HepG2 (cell line): ENCODE measurements at regions of chr17 and their contacts with region 1.

Region 1: DNA sequence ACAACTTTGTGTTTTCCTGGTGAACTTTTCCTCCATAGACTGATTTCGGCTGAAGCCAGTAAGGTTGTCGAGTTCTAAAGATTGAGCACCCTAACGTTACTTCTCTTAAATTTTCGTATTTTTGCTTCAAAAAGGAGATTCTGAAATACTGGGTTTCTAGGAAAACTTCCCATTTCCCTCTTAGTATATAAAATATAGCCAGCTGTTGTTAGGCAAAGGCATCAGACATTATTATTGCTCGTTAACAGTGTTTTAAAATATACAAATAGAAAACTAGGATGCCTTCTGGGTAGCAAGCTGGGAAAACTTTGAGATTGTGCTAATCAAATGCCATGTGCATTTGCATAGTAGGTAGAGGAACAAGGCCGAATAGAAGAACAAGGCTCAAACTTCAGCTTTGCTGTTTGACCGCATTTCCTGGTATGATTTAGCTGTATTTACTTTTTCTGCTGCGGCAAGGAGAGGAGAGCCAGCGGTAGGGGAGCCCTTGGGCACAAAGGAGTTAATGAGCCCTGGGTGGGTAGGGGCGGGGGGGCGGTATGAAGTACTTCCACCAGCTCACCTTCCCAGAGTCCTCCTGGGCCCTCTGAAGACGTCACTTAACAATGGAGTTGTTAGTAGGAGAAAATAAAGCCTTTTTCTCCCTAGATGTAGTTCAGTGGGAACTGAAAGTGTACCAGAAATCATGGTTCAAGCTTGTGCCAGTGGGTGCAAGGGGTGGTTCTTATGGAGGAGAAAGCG is 151.9 kb downstream of the MSI2 start:
- DNase-seq: peak; percentile 86
- ATAC-seq: peak; percentile 27
- H3K4me3 ChIP-seq: peak overlapping the region; percentile 26 to 57 (median 51)
- H3K27ac ChIP-seq: peak overlapping the region; percentile 96
- H3K4me1 ChIP-seq: peaks cover 100% of the 10 kb centered on the region
- H3K27me3 ChIP-seq: no peaks in the 10 kb centered on the region
- CTCF ChIP-seq: no peak
- EP300 ChIP-seq: peak in 1 of 2 experiments; percentile 41; a peak in 1 of 4 replicates
- POLR2A ChIP-seq: peak in 1 of 2 experiments; percentile 39; a peak in 1 of 4 replicates
- RAD21 ChIP-seq: no peak

Region 2: GRCh38 chr17:57255776-57256681 is 152.2 kb before region 1 on chr17 and contains the start of gene MSI2:
- CTCF ChIA-PET with region 1: no interaction called
- POLR2A ChIA-PET with region 1: interaction called, 20 read pairs
- in situ Hi-C with region 1: no loop called
- intact Hi-C with region 1: no loop called
- DNase-seq: peak; percentile 76
- ATAC-seq: peak; percentile 83
- H3K4me3 ChIP-seq: peak within 1 kb of the TSS; percentile 75 to 95 (median 79)
- H3K27ac ChIP-seq: peak within 1 kb of the TSS; percentile 63
- H3K4me1 ChIP-seq: peaks cover 54% of the 10 kb centered on the region
- H3K27me3 ChIP-seq: no peaks in the 10 kb centered on the region
- CTCF ChIP-seq: no peak
- EP300 ChIP-seq: no peak
- POLR2A ChIP-seq: peak in 1 of 2 experiments; percentile 51; a peak in 2 of 4 replicates
- RAD21 ChIP-seq: no peak
- total RNA-seq, gene MSI2: 68.1 and 78.4 TPM in 2 replicates

Region 3: DNA sequence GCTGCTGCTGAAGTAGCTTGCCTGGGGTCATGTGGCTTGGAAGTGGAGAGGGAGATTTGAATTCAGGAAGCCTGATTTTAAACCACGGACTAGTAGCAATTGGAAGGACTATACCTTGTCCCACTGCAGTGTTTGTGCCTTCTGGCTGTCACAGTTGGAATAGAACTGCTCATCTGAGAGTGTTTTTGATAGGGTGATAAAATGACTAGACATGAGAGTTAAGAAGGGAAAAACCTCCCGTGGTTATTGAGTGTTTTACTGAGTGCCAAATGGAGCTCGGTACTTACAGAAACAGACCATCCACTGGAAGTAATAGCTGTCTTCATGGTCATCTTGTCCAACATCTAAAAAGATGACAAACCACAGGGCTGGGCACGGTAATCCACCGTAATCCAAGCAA is 81.5 kb before region 1 on chr17:
- CTCF ChIA-PET with region 1: no interaction called
- POLR2A ChIA-PET with region 1: interaction called, 10 read pairs
- in situ Hi-C with region 1: no loop called
- intact Hi-C with region 1: no loop called
- DNase-seq: no peak
- ATAC-seq: no peak
- H3K4me3 ChIP-seq: no peak overlapping the region
- H3K27ac ChIP-seq: peak overlapping the region; percentile 20
- H3K4me1 ChIP-seq: peaks cover 43% of the 10 kb centered on the region
- H3K27me3 ChIP-seq: no peaks in the 10 kb centered on the region
- CTCF ChIP-seq: no peak
- EP300 ChIP-seq: no peak
- POLR2A ChIP-seq: no peak
- RAD21 ChIP-seq: no peak

Region 4: GRCh38 chr17:57440522-57441485 is 32.6 kb after region 1 on chr17:
- CTCF ChIA-PET with region 1: interaction called, 4 read pairs
- POLR2A ChIA-PET with region 1: interaction called, 24 read pairs
- in situ Hi-C with region 1: no loop called
- intact Hi-C with region 1: loop called (anchors 2 kb)
- DNase-seq: peak; percentile 91
- ATAC-seq: peak; percentile 84
- H3K4me3 ChIP-seq: peak overlapping the region in 2 of 3 experiments; percentile 17 to 54; a peak in 3 of 6 replicates
- H3K27ac ChIP-seq: peak overlapping the region; percentile 64
- H3K4me1 ChIP-seq: peaks cover 84% of the 10 kb centered on the region
- H3K27me3 ChIP-seq: no peaks in the 10 kb centered on the region
- CTCF ChIP-seq: peak; percentile 88
- EP300 ChIP-seq: no peak
- POLR2A ChIP-seq: no peak
- RAD21 ChIP-seq: peak; percentile 89

Region 5: DNA sequence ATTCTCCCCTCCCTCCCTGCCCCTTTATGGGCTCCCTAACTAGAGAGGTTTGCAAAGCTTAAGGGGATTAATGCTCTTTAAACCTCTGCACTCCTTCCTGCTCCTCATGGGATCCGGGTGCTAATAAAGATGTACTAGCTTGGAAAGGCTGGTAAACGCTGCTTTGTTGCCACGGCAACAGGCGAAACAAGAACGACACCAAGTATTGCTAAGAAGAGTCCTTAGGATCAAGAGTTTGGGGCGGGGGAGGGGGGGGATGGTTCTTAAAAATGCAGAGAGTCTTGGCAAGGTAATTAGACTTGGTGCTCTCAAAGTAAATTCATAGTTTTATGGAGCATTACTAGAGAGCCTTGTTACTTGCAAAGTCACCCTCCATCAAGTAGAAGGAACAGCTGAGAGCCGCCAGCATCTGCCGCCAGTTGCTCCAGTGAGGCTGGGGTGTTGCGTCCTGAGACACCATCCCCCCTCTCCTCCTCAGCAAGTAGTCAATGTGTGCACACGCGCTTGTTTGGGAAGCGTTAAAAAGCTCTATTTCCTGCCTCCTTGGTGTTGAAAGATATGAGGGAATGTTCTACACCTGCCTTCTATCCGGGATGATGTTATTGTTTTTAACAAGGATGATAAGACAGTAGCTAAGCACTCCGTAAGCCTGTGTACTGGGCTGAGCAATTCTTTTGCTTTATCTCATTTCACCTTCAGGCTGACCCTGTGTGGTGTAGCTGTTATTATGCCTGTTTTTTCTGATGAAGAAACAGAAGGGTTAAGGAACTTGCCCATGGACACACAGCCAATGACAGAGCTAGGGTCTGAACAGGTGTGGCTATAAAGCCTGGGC is 146.0 kb after region 1 on chr17:
- CTCF ChIA-PET with region 1: no interaction called
- POLR2A ChIA-PET with region 1: no interaction called
- in situ Hi-C with region 1: no loop called
- intact Hi-C with region 1: no loop called
- DNase-seq: no peak
- ATAC-seq: no peak
- H3K4me3 ChIP-seq: no peak overlapping the region
- H3K27ac ChIP-seq: no peak overlapping the region
- H3K4me1 ChIP-seq: peaks cover 73% of the 10 kb centered on the region
- H3K27me3 ChIP-seq: no peaks in the 10 kb centered on the region
- CTCF ChIP-seq: no peak
- EP300 ChIP-seq: no peak
- POLR2A ChIP-seq: no peak
- RAD21 ChIP-seq: no peak

Region 6: GRCh38 chr17:57577751-57578607 is 169.7 kb after region 1 on chr17:
- CTCF ChIA-PET with region 1: no interaction called
- POLR2A ChIA-PET with region 1: interaction called, 12 read pairs
- in situ Hi-C with region 1: no loop called
- intact Hi-C with region 1: no loop called
- DNase-seq: peak; percentile 95
- ATAC-seq: peak; percentile 80
- H3K4me3 ChIP-seq: peak overlapping the region; percentile 17 to 56 (median 24); a peak in 5 of 6 replicates
- H3K27ac ChIP-seq: peak overlapping the region; percentile 75
- H3K4me1 ChIP-seq: peaks cover 84% of the 10 kb centered on the region
- H3K27me3 ChIP-seq: no peaks in the 10 kb centered on the region
- CTCF ChIP-seq: no peak; the same call in 1 of the 2 replicates
- EP300 ChIP-seq: peak; percentile 77 to 96; a peak in 3 of 4 replicates
- POLR2A ChIP-seq: 0 out of 4 replicates have a peak, but pooled peaks of 1 of the 2 experiments have one; percentile 13
- RAD21 ChIP-seq: no peak

Region 7: DNA sequence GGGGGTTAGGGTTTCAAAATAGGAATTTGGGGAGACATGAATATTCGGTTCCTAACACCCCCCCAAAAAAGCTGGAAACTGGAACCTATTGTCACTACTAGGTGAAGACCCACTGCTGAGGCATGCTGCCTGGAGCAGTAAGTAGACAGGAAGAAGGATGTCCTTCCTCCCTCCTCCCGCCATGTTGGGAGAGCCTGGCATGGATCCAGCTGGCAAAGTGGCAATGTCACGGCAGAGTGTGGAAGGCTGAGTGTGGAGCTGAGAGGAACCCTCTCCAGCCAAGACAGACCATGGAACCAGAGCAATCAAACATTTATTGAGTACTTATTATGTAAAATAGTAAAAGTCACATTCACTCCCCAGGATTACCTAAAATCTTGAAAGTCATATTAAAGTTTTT is 287.8 kb after region 1 on chr17:
- CTCF ChIA-PET with region 1: no interaction called
- POLR2A ChIA-PET with region 1: no interaction called
- in situ Hi-C with region 1: no loop called
- intact Hi-C with region 1: no loop called
- DNase-seq: no peak
- ATAC-seq: no peak
- H3K4me3 ChIP-seq: no peak overlapping the region
- H3K27ac ChIP-seq: no peak overlapping the region
- H3K4me1 ChIP-seq: peaks cover 24% of the 10 kb centered on the region
- H3K27me3 ChIP-seq: no peaks in the 10 kb centered on the region
- CTCF ChIP-seq: no peak
- EP300 ChIP-seq: no peak
- POLR2A ChIP-seq: no peak
- RAD21 ChIP-seq: no peak